ENCODE measurements at regions of chr2 and their contacts with region 1.

Region 1: DNA sequence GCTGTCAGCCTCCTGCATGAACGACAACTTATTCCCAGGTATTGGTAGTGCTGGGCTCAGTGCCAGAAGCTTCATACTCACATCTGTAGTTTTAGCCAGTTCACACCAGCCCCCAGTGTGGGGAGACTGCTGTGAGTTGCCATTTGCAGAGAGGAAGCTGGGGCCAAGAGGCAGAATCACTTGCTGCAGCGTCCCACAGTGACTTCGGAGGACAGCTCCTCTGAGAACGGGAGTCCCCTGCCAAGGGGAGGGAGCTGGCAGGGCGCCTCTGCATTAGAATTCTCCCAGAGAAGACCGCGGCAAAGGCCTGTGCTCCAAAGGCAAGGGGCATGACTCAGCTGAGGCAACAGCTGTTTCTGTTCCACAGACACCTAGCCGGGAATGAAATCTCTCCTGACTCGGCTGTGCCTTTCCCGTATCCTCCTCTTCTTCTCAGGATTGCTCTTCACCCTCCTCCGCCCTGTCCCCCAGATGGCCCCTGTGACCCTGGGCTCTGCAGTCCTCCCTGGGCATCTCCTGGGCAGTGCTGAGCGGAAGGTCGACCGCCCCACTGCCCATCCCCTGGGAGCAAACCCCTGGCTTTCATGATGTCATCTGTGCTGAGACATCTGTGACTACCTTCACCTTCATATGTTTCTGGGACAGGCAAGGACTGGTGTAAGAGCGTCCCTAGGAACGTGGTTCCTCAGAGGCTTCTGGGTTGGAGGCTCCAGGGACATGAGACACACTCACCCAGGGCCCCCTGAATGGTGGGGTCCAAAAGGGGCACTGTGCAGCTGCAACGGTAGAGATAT is 18.0 kb downstream of the MAL start:
- DNase-seq: no peak
- H3K4me3 ChIP-seq: no peak overlapping the region
- H3K4me3 Mint-ChIP-seq: no peak overlapping the region
- H3K27ac ChIP-seq: no peak overlapping the region
- H3K27ac Mint-ChIP-seq: peak overlapping the region; percentile 0 to 82 (median 67)
- H3K4me1 ChIP-seq: peaks cover 26% of the 10 kb centered on the region
- H3K4me1 Mint-ChIP-seq: peaks cover 34 to 81% (median 59%) of the 10 kb centered on the region in 4 donors
- H3K27me3 ChIP-seq: no peaks in the 10 kb centered on the region
- H3K27me3 Mint-ChIP-seq: no peaks in the 10 kb centered on the region

Region 2: DNA sequence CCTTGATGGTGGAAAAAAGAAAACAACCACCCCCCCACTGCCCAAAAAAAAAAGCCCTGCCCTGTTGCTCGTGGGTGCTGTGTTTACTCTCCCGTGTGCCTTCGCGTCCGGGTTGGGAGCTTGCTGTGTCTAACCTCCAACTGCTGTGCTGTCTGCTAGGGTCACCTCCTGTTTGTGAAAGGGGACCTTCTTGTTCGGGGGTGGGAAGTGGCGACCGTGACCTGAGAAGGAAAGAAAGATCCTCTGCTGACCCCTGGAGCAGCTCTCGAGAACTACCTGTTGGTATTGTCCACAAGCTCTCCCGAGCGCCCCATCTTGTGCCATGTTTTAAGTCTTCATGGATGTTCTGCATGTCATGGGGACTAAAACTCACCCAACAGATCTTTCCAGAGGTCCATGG is 10.0 kb after region 1 on chr2:
- CTCF ChIA-PET with region 1: interaction called, 15 read pairs
- POLR2A ChIA-PET with region 1: interaction called, 10 read pairs
- intact Hi-C with region 1: no loop called
- DNase-seq: no peak
- H3K4me3 ChIP-seq: no peak overlapping the region
- H3K4me3 Mint-ChIP-seq: peak overlapping the region in 2 of 8 donors; percentile 4 to 22
- H3K27ac ChIP-seq: no peak overlapping the region
- H3K27ac Mint-ChIP-seq: peak overlapping the region; percentile 22 to 87 (median 66)
- H3K4me1 ChIP-seq: peaks cover 42% of the 10 kb centered on the region
- H3K4me1 Mint-ChIP-seq: peaks cover 25 to 70% (median 45%) of the 10 kb centered on the region in 4 donors
- H3K27me3 ChIP-seq: no peaks in the 10 kb centered on the region
- H3K27me3 Mint-ChIP-seq: no peaks in the 10 kb centered on the region